ENCODE measurements at regions of chr1 and their contacts with region 1.

Region 1: DNA sequence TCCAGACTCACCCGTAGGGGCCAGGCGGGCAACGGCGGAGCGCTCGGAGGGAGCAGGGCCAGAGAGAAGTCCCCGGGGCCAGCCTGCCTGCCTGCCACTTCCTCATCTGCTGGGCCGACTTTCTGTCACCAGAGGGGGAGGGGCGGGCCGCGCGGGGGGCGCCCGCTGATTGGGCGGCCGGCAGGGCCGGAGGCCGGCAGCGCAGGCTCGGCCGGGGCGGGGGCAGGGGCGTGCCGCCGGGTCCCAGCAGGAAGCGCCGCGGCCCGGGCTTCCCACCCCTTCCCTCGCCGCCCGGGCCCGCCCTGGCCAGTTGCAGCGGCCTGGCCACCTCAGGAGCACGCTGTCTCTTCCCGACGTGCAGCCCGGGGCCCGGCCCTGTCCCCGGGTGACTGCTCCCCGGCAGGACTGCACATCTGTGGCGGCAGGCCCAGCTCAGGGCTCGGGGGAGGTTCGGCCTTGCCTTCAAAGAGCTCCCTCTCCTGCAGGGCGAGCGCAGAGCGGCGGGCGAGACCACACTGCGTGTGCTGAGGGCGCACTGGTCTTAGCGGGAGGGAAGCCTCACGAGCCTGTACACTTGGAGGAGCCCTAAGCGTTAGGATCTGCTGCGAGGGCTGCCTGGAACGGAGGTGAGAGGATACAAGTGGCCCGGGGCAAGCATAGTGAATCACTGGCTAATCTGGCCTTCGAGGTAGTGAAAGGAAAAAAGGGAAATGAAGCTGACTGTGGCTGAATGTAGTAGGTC is at the start of gene ELOVL1:
- DNase-seq: peak; percentile 98
- ATAC-seq: peak; percentile 96
- total RNA-seq, gene ELOVL1: 34.4 TPM

Region 2: GRCh38 chr1:42551180-42551579 is 816.9 kb before region 1 on chr1:
- intact Hi-C with region 1: no loop called
- DNase-seq: no peak
- ATAC-seq: no peak

Region 3: DNA sequence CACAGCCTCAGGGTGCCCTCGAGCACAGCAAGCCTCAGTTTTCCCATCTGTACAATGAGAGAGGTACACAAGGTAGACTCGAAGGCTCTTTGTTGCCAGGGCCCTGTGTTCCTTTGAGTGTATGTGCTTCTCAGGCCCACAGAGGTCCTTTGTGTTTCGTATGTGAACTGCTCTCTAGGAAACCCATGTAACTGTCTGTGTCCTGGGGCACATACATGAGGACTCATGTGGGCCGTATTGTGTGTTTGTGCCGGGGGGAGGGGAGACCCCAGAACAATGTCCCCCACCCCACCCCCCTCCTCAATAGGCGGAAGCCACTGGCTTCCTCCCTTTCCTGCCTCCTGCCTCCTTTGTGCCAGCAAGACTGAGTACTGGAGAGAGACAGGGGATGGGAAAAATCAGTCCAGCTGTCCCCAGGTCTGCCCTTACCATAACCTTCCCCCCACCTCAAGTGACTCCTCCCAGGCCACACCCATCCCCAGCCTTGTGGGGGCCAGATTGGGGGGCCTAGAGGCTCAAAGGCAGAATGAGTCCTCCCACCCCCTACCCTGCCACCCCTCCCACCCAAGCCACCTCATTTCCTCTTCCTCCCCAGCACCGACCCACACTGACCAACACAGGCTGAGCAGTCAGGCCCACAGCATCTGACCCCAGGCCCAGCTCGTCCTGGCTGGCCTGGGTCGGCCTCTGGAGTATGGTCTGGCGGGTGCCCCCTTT is 67.5 kb before region 1 on chr1 and contains the start of gene TIE1:
- intact Hi-C with region 1: loop called (anchors 5 kb)
- DNase-seq: no peak
- ATAC-seq: peak; percentile 47
- total RNA-seq, gene TIE1: 22.2 TPM

Region 4: GRCh38 chr1:43389326-43390313 is 21.5 kb after region 1 on chr1 and contains the starts of genes MED8 and SZT2:
- intact Hi-C with region 1: loop called (anchors 2 kb)
- DNase-seq: peak; percentile 95
- ATAC-seq: peak; percentile 98
- total RNA-seq, gene MED8: 18.0 TPM
- total RNA-seq, gene SZT2: 22.5 TPM

Region 5: DNA sequence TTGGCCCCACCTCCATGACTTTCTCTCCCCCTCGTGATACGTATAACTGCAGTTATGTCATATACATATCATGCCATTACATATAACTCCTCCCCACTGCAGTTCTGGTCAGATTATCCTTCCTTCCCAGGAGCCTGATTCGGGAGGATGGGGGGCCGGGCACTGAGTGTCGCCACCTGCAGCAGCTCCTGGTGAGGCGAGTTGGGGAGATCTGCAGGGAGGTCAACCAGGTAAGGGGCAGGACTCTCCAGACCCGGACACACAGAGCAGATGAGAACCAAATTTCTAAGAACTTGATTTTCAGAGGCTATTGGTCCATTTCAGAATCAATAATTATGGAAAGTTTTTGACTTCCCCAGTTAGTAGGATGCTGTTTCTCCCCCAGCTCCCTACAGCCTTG is 66.2 kb after region 1 on chr1:
- intact Hi-C with region 1: no loop called
- DNase-seq: no peak
- ATAC-seq: no peak